H1 (cell line): ENCODE measurements at regions of chr4 and their contacts with region 1.

Region 1: DNA sequence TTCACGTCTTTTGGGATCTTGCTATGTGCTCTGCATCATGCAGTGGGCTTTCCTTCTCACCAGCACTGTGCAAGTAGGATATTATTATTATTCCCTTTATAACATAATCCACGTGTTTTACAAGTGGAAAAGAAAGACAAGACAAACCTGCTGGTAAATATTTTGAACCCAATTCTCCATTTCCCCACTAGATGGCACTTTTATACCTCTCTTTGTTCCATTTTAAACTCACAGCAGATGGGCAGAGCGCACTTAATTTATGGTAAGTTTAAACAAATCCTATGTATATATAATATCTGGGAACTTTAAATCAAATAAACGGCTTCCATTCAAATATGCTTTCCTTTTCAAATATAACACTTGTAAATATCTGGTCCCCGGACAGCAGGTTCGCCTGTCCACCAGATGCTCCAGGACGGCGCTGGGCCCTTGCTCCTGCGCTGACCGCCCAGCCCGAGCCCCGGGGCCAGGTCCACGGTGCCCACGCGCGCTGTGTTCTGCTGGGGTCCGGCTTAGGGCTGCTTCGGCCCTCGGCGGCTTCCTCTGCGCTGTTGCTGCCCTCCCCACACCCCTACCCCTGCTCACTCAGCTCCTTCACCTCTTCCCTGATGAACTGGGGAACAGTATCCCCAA is 31.1 kb downstream of the F11 start:
- DNase-seq: no peak
- H3K4me3 ChIP-seq: no peak overlapping the region
- H3K27ac ChIP-seq: no peak overlapping the region
- H3K4me1 ChIP-seq: peaks cover 0 to 7% (median 0%) of the 10 kb centered on the region in 4 experiments; a peak in 4 of 7 replicates
- H3K27me3 ChIP-seq: peaks cover 0 to 5% (median 2%) of the 10 kb centered on the region in 4 experiments; a peak in 3 of 7 replicates
- CTCF ChIP-seq: peak in 2 of 3 experiments; percentile 45 to 52; a peak in 2 of 4 replicates
- EP300 ChIP-seq: no peak
- POLR2A ChIP-seq: no peak
- RAD21 ChIP-seq: peak; percentile 76 to 77

Region 2: GRCh38 chr4:186172546-186172945 is 124.6 kb before region 1 on chr4:
- CTCF ChIA-PET with region 1: no interaction called
- POLR2A ChIA-PET with region 1: no interaction called
- DNase-seq: no peak
- H3K4me3 ChIP-seq: no peak overlapping the region
- H3K27ac ChIP-seq: no peak overlapping the region
- H3K4me1 ChIP-seq: no peaks in the 10 kb centered on the region; a peak in 1 of 7 replicates
- H3K27me3 ChIP-seq: no peaks in the 10 kb centered on the region
- CTCF ChIP-seq: no peak
- EP300 ChIP-seq: no peak
- POLR2A ChIP-seq: no peak
- RAD21 ChIP-seq: no peak

Region 3: DNA sequence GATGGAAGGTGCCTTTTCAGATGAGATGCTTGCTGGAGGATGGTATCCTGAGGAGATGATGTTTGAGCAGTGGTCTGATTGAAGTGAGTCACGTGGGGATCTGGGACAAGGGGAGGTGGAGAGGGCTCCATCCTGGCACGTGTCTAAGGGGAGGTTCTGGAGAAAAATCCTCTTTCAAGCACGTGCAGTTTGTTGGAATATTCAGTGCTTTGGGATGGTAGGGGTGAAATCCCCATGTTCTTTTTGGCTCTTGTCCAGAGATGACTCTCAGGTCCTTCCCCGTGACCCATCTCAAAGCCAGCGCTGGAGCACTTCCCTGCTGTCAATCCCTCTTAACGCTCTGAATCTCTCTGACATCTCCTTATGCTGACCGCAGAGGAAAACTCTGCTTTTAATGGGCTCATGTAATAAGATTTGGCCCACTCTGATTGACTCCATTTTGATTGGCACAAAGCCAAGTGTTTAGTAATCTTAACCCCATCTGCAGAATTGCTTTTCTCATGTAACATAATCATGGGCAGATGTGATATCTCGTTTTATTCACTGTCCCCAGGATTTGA is 80.6 kb before region 1 on chr4:
- CTCF ChIA-PET with region 1: no interaction called
- POLR2A ChIA-PET with region 1: no interaction called
- DNase-seq: no peak
- H3K4me3 ChIP-seq: no peak overlapping the region
- H3K27ac ChIP-seq: no peak overlapping the region
- H3K4me1 ChIP-seq: no peaks in the 10 kb centered on the region
- H3K27me3 ChIP-seq: no peaks in the 10 kb centered on the region; a peak in 2 of 7 replicates
- CTCF ChIP-seq: no peak
- EP300 ChIP-seq: no peak
- POLR2A ChIP-seq: no peak
- RAD21 ChIP-seq: no peak

Region 4: DNA sequence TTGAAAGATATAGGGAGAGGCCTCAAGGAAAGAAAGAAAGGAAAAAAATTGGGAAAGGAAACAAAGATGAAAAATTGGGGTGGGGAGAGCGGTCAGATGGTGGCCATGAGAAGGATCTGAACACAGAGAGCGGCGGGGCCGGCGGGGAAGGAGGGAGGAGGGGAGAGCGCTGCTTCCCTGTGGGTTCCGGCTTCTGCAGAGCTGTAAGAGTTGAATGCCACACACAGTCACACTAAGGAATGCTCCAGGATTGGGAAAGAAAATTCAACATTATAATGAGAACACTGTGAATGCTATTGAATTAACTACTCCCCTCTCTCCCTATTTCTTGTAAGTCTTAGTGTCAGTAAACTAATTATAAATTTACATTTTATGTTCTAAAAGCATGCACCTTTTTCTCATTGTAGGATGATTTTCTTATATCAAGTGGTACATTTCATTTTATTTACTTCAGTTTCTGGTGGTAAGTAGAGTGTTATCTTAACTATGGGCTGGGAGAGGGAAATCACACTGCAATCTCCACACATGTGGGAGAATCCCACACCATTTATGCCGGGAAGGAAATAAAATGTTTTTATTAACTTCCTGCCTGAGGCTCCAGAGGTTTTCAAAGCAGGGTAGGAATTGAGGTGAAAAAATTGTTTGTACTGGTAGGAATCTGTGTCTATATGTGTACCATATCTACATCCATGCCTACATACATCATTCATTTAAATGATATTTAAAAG is 30.2 kb before region 1 on chr4:
- CTCF ChIA-PET with region 1: no interaction called
- POLR2A ChIA-PET with region 1: no interaction called
- DNase-seq: no peak
- H3K4me3 ChIP-seq: peak overlapping the region in 1 of 4 experiments; percentile 48; a peak in 2 of 8 replicates
- H3K27ac ChIP-seq: no peak overlapping the region
- H3K4me1 ChIP-seq: peaks cover 3 to 14% (median 9%) of the 10 kb centered on the region in 4 experiments; a peak in 5 of 7 replicates
- H3K27me3 ChIP-seq: no peaks in the 10 kb centered on the region
- CTCF ChIP-seq: no peak
- EP300 ChIP-seq: no peak
- POLR2A ChIP-seq: no peak
- RAD21 ChIP-seq: no peak

Region 5: DNA sequence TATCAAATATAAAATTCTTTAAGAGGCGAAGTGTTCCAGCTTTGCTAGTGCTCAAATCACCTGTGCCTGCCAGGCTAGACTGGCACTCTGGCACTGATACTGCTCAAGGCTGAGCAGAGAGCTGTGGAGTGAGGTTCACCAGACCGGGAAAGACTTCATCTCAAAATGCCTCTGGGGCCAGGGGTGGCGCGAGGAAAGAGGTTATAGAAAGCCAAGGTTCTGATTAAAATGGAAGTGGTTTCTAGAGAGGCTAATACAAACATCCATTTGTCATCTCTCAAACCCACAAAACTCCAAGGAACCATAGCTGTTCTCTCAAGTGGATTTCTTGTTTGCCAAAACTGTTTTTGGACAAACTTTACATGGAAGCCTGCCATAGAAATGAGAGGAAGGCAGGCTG is 10.4 kb after region 1 on chr4:
- CTCF ChIA-PET with region 1: interaction called, 11 read pairs
- POLR2A ChIA-PET with region 1: no interaction called
- DNase-seq: no peak
- H3K4me3 ChIP-seq: no peak overlapping the region
- H3K27ac ChIP-seq: no peak overlapping the region
- H3K4me1 ChIP-seq: peaks cover 0 to 3% (median 0%) of the 10 kb centered on the region in 4 experiments; a peak in 1 of 7 replicates
- H3K27me3 ChIP-seq: no peaks in the 10 kb centered on the region; a peak in 1 of 7 replicates
- CTCF ChIP-seq: no peak
- EP300 ChIP-seq: no peak
- POLR2A ChIP-seq: no peak
- RAD21 ChIP-seq: no peak

Region 6: DNA sequence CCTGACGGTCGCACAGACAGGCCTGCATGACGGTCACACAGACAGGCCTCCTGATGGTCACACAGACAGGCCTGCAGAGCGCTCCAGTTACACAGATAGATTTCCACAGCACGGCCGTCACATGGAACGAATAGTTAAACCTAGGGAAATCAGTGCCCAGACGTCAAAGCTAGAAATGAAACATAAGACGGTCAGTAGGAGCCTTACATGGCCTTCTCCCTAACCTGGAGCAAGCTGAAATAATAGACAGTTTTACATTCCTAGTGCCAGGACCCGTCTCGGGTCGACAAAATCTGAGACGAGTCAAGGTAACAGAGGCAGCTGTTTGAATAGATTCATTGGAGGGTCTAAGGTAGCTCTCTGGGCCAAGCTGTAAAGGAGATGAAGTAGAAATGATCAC is 131.4 kb after region 1 on chr4:
- CTCF ChIA-PET with region 1: no interaction called
- POLR2A ChIA-PET with region 1: no interaction called
- DNase-seq: no peak
- H3K4me3 ChIP-seq: no peak overlapping the region
- H3K27ac ChIP-seq: no peak overlapping the region
- H3K4me1 ChIP-seq: no peaks in the 10 kb centered on the region
- H3K27me3 ChIP-seq: no peaks in the 10 kb centered on the region
- CTCF ChIP-seq: no peak
- EP300 ChIP-seq: no peak
- POLR2A ChIP-seq: no peak
- RAD21 ChIP-seq: no peak

Region 7: GRCh38 chr4:186587416-186588018 is 290.4 kb after region 1 on chr4:
- CTCF ChIA-PET with region 1: interaction called, 32 read pairs
- POLR2A ChIA-PET with region 1: no interaction called
- DNase-seq: peak in 1 of 2 experiments; percentile 80
- H3K4me3 ChIP-seq: no peak overlapping the region
- H3K27ac ChIP-seq: no peak overlapping the region
- H3K4me1 ChIP-seq: no peaks in the 10 kb centered on the region; a peak in 1 of 7 replicates
- H3K27me3 ChIP-seq: no peaks in the 10 kb centered on the region
- CTCF ChIP-seq: peak; percentile 62 to 73 (median 67)
- EP300 ChIP-seq: no peak
- POLR2A ChIP-seq: no peak
- RAD21 ChIP-seq: peak; percentile 72 to 76